Mammary epithelial cell (primary cell): ENCODE measurements at regions of chr9 and their contacts with region 1.

Region 1: GRCh38 chr9:87336914-87337333 is 160.7 kb upstream of the DAPK1 start:
- DNase-seq: peak; percentile 64
- H3K4me3 ChIP-seq: peak overlapping the region; percentile 20 to 34 (median 25)
- H3K27ac ChIP-seq: no peak overlapping the region
- H3K4me1 ChIP-seq: peaks cover 16% of the 10 kb centered on the region
- H3K27me3 ChIP-seq: no peaks in the 10 kb centered on the region
- CTCF ChIP-seq: peak; percentile 58 to 66

Region 2: DNA sequence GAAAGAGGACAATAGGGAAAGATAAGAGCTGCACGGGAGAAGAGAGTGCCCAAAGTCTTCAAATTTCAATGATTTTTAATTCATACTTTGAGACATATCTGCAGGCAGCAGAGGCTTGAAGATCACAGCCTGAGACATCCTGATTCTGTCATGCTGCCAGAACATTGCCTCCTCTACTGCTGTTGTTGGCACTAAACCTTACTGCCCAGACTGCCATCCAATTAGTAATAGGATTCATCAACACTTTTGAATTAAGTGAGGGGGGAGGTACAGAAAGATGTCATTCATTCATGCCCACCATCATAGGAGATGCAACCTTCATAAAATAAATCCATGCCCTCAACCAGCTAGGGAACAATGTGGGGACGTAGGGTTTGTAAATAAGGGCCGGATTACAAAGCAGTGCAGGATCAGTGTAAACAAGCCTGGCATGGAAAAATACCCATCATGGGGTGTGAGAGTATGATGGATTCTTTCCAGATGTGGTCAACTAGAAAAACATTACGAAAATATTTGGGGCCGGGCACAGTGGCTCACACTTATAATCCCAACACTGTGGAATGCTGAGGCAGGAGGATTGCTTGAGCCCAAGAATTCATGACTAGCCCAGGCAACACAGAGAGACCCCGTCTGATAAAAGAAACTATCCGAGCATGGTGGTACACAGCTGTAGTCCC is 38.6 kb after region 1 on chr9:
- CTCF ChIA-PET with region 1: interaction called, 10 read pairs
- dilution Hi-C with region 1: no loop called
- in situ Hi-C with region 1: no loop called
- intact Hi-C with region 1: loop called (anchors 2 kb)
- DNase-seq: peak; percentile 84
- H3K4me3 ChIP-seq: no peak overlapping the region
- H3K27ac ChIP-seq: peak overlapping the region; percentile 62
- H3K4me1 ChIP-seq: peaks cover 32% of the 10 kb centered on the region
- H3K27me3 ChIP-seq: no peaks in the 10 kb centered on the region
- CTCF ChIP-seq: no peak

Region 3: DNA sequence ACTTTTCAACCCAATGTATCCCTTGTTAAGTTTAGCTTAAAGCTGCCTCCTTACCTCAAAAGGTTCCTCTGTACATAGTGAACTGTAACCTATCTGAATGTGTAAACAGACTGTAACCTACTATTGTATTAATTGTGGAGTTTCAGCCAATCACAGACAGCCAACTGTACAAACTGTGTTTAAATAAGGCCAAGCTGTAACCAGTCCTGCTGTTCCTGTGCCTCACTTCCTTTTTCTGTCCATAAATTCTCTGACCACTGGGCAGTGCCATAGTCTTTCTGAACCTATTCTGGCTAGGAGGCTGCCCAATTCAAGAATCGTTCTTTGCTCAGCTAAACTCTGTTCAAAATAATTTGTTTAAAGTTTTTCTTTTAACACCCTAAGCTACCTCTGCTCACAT is 86.1 kb after region 1 on chr9:
- CTCF ChIA-PET with region 1: no interaction called
- dilution Hi-C with region 1: no loop called
- in situ Hi-C with region 1: no loop called
- intact Hi-C with region 1: no loop called
- DNase-seq: no peak
- H3K4me3 ChIP-seq: no peak overlapping the region
- H3K27ac ChIP-seq: no peak overlapping the region
- H3K4me1 ChIP-seq: peaks cover 7% of the 10 kb centered on the region
- H3K27me3 ChIP-seq: no peaks in the 10 kb centered on the region
- CTCF ChIP-seq: no peak

Region 4: DNA sequence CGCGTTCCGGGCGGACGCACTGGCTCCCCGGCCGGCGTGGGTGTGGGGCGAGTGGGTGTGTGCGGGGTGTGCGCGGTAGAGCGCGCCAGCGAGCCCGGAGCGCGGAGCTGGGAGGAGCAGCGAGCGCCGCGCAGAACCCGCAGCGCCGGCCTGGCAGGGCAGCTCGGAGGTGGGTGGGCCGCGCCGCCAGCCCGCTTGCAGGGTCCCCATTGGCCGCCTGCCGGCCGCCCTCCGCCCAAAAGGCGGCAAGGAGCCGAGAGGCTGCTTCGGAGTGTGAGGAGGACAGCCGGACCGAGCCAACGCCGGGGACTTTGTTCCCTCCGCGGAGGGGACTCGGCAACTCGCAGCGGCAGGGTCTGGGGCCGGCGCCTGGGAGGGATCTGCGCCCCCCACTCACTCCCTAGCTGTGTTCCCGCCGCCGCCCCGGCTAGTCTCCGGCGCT is 160.7 kb after region 1 on chr9 and contains the start of gene DAPK1:
- CTCF ChIA-PET with region 1: interaction called, 17 read pairs
- dilution Hi-C with region 1: no loop called
- in situ Hi-C with region 1: no loop called
- intact Hi-C with region 1: loop called (anchors 1 kb)
- DNase-seq: peak; percentile 44
- H3K4me3 ChIP-seq: peak within 1 kb of the TSS; percentile 57 to 77 (median 69)
- H3K27ac ChIP-seq: no peak within 1 kb of the TSS
- H3K4me1 ChIP-seq: peaks cover 18% of the 10 kb centered on the region
- H3K27me3 ChIP-seq: peaks cover 7% of the 10 kb centered on the region
- CTCF ChIP-seq: no peak
- total RNA-seq, gene DAPK1: 17.1 to 33.3 TPM

Region 5: DNA sequence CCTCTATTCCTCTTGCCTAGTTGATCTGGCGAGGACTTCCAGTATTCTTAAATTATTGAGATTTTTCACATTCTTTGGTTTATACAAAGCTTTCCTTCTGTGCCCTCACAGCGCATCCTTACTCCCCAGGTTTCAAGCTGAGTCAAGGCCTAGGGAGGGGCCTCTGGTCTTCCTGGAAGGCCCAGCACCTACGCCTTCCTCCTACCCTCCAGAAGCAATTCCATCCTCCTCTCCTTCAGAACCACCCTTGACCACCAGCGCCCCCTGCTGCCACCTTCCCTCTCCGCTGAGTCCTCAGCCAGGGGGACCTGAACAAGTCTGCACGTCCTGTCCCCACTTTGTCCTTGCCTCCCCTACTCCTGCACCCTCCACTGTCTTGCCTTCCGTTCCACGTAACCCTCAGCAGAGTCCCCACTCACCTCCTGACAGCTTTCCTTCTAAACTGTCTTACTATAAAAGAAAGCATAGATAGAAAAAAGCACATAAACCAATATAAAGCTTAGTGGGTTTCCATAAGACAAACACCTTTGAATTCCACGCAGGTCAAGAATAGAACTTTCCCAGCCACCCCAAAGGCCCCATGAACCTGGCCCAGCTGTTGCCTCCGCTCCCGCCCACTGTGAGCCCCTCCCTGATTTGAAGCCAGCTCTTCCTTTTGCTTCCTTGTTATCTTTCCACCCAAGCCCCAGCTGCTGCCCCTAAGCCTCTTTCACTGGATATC is 326.0 kb after region 1 on chr9:
- CTCF ChIA-PET with region 1: interaction called, 7 read pairs
- dilution Hi-C with region 1: no loop called
- in situ Hi-C with region 1: loop called (anchors 5 to 25 kb)
- intact Hi-C with region 1: loop called (anchors 1 kb)
- DNase-seq: peak; percentile 78
- H3K4me3 ChIP-seq: no peak overlapping the region
- H3K27ac ChIP-seq: no peak overlapping the region
- H3K4me1 ChIP-seq: no peaks in the 10 kb centered on the region
- H3K27me3 ChIP-seq: no peaks in the 10 kb centered on the region
- CTCF ChIP-seq: peak; percentile 84 to 92

Region 6: DNA sequence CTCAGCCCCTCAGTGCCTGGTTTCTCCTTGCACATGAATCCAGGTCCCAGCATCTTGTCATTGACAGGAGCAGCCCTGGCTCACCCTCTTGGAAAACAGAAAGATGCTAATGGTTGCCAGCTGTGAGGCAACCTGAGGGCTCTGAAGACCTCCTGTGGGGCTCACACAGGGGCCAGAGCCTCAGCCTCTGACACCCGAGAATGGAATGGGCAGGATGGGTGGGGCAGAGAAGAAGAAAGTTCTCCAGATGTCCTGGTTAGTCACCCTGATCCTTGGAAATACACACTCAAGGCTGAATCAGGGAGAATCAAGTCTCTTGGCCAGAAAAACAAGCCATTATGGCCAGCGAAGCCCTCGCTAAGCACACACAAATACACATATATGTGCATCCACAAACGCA is 513.5 kb after region 1 on chr9:
- CTCF ChIA-PET with region 1: no interaction called
- dilution Hi-C with region 1: no loop called
- in situ Hi-C with region 1: no loop called
- intact Hi-C with region 1: no loop called
- DNase-seq: peak; percentile 75
- H3K4me3 ChIP-seq: no peak overlapping the region
- H3K27ac ChIP-seq: no peak overlapping the region
- H3K4me1 ChIP-seq: peaks cover 9% of the 10 kb centered on the region
- H3K27me3 ChIP-seq: no peaks in the 10 kb centered on the region
- CTCF ChIP-seq: no peak

Region 7: DNA sequence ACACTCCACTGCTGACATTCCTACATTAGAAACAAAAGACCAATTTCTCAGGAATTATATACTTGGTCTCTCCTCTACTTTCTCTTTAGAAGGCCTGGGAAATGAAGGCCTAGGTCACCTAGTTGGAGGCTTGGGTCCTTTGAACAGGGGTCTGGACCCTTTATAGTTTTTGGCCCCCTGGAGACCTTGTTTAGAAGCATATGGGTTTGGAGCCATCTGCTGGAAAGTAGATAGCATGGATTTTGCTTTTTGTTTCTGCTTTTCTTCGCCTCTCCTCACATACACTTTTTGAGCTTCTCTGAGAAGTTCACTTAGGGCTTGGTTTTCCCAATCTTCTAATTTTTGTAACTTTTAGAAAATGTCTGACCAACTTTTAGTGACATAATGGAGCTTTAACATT is 704.5 kb after region 1 on chr9:
- CTCF ChIA-PET with region 1: no interaction called
- dilution Hi-C with region 1: no loop called
- in situ Hi-C with region 1: no loop called
- intact Hi-C with region 1: loop called (anchors 10 kb)
- DNase-seq: no peak
- H3K4me3 ChIP-seq: no peak overlapping the region
- H3K27ac ChIP-seq: no peak overlapping the region
- H3K4me1 ChIP-seq: no peaks in the 10 kb centered on the region
- H3K27me3 ChIP-seq: no peaks in the 10 kb centered on the region
- CTCF ChIP-seq: peak in 1 of 2 donors; percentile 43